ENCODE measurements at regions of chr12 and their contacts with region 1.

Region 1: GRCh38 chr12:101939856-101940265 is 62.5 kb downstream of the DRAM1 start:
- DNase-seq: peak; percentile 34 to 51
- ATAC-seq: peak; percentile 73

Region 2: DNA sequence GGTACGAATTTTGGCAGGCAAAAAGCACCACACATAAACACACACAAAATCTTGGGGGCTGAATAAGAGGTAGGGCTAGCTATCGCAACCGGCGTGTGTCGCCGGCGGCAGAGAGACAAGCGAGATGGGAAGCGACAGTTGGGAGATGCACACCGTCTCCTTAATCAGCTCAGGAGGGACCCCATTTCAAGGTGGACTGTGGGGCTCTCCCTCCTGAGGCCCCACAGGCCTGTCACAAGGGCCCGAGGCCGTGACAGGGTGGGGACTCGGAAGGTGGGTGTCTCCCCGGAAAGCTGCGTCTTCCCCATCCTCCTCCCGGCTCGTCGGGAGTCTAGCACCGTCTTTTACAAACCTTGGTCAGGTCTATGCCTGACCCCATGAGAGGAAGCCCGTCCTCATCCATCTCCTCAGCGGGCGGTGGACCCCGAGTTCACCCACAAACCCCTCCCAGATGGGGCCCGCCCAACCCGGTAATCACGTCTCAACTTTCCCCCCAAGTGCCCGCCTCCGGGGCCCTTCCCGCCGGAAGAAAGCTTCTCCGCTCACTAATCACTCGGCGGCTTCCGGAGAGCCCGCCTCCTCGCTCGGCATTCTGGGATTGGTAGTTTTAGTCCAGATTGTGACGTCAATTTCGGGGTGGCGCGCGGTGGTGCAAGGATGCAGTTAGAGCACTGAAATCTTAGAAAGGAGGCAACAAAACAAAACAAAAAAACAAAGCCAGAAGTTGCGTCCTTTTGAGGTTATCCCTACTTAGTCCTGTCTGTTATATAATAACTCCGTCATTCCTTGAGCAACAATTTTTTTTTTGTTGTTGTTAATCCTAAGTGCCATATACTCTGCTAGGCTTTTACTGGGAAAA is 121.9 kb after region 1 on chr12 and contains the start of gene WASHC3:
- intact Hi-C with region 1: loop called in 1 of 2 experiments (anchors 10 kb)
- DNase-seq: peak; percentile 95 to 96
- ATAC-seq: peak; percentile 99
- total RNA-seq, gene WASHC3: 30.4 to 32.8 TPM

Region 3: DNA sequence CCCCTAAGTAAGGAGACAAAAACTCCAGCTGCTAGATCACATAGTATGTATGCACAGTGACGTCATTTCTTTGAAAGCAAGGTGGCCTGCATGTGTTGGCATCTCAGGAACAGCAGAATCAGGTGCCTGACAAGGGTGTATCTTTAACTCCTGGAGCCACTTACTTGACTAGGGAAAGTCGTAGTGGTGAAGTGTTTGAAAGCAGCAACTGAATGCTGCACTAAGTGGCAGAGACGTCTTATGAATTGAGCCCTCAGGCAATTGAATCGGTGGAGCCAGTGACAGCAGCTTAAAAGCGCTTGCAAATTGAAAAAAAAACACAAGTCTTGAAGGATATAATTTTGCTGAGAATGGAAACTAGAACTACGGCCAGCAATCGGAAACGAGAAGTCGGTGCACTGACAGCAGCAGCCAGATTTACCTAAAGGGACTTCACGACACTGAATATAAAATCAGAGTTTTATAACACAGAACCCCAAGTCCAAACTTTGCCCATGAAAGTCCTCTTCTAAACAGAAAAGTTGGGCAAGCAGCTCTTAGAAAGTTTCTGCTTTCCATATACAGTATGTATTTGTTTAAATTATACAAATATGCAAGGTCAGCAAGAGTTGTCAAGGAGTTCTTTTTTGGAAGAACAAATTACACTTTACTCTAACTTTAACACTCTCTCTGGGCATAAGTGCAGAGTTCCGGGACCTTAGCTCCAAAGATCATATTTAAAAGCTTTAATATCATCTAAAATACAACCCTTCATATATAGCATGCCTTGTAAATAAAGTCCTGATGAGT is 539.4 kb after region 1 on chr12:
- intact Hi-C with region 1: loop called (anchors 5 to 10 kb)
- DNase-seq: no peak
- ATAC-seq: no peak

Region 4: DNA sequence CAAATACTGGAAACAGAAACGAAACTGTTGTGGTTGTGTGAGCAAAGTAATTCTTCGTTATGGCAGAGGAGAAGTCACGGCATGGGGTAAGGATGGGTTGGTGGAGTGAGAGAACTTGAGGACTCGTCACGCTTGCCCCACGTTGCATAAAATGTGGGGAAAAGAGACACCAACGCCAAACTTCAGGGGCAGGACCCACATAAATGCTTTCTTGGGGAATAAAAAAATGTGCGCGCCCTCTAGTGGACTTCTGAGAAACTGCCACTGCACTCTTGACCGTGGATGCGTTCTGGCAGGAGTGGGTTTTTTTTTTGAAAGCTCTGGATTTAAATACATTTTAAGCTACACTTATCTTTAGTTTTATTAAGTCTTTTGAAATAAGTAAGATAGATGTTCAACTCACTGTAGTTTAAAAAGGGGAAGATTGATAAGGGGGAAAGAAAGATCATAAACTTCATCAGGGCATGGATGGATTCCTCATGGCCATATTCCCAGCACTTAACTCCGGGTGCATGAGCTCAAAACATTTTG is 544.6 kb after region 1 on chr12:
- intact Hi-C with region 1: loop called (anchors 5 to 10 kb)
- DNase-seq: peak; percentile 37 to 42
- ATAC-seq: peak; percentile 30